Heart left ventricle (tissue), 16 donors: ENCODE measurements at regions of chr5 and their contacts with region 1.

Region 1: GRCh38 chr5:112529525-112529924 is 110.4 kb upstream of the EPB41L4A start:
- DNase-seq: no peak
- ATAC-seq: no peak
- H3K4me3 ChIP-seq: no peak overlapping the region
- H3K27ac ChIP-seq: no peak overlapping the region
- H3K4me1 ChIP-seq: no peaks in the 10 kb centered on the region
- H3K27me3 ChIP-seq: no peaks in the 10 kb centered on the region
- CTCF ChIP-seq: peak in 10 of 12 donors; percentile 17 to 58 (median 40)
- POLR2A ChIP-seq: no peak

Region 2: DNA sequence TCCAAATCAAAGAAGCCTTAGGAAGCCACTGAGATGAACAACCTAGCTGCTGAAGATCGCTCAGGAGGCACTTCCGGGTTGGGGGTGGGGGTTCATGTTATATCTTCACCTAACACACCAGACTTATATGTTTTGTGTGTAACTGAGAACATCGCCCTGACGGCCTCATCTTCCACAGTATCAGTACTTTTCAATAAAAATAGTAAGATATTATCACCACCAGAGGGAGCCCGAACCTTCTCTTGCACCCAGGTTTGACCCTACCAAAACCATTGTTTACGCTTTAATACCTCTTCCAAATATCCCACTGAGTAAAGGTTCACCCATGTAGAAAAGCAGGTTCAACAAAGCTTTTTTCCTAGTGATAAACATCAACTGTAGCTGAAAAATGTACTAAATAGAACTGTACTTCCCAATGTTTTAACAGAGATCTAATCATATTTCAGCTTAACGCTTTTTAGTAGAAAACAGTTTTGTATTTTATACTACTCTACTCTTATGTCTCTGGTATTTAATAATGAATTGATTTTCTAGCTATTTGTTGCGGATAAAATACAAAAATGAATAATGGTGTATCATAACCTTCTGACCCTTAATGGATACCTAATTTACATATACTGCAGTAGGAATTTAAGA is 354.4 kb before region 1 on chr5:
- intact Hi-C with region 1: loop called in 4 of 10 experiments (anchors 5 to 10 kb)
- DNase-seq: peak in 2 of 5 donors; percentile 16 to 26
- ATAC-seq: peak in 3 of 4 donors; percentile 64 to 74 (median 72)
- H3K4me3 ChIP-seq: no peak overlapping the region
- H3K27ac ChIP-seq: no peak overlapping the region
- H3K4me1 ChIP-seq: no peaks in the 10 kb centered on the region
- H3K27me3 ChIP-seq: no peaks in the 10 kb centered on the region
- CTCF ChIP-seq: peak; percentile 48 to 76 (median 70)
- POLR2A ChIP-seq: no peak

Region 3: DNA sequence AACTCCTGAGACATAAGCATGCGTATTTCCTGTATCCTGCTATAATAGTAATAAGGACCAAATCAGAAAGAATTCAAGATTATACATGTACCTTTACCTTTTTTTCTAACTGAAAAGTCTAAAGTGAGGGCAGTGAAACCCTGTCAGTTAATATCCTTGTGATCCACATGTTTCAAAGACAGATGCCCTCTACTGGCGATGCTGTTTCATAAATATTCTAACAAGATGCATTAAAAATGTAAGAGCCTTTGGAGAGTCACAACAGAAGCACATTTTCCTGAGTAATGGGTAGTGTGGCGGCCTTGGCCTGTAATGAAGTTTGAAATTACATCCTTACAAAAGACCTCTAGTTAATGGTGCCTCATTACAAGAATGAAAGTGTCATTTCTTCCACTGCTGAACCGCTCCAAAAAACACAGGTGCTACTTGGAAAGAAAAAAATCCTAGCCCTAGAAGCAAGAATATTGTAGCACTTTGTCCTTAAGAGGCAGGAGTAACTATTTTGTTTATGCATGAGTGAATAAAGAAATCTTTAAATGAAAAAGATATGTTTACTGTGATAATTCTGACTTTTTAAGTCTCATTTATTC is 343.0 kb before region 1 on chr5:
- intact Hi-C with region 1: loop called in 1 of 10 experiments (anchors 10 kb)
- DNase-seq: no peak
- ATAC-seq: peak in 2 of 4 donors; percentile 26 to 38
- H3K4me3 ChIP-seq: no peak overlapping the region
- H3K27ac ChIP-seq: no peak overlapping the region
- H3K4me1 ChIP-seq: peaks cover 0 to 3% (median 0%) of the 10 kb centered on the region in 12 donors
- H3K27me3 ChIP-seq: no peaks in the 10 kb centered on the region
- CTCF ChIP-seq: peak; percentile 21 to 67 (median 46)
- POLR2A ChIP-seq: no peak

Region 4: DNA sequence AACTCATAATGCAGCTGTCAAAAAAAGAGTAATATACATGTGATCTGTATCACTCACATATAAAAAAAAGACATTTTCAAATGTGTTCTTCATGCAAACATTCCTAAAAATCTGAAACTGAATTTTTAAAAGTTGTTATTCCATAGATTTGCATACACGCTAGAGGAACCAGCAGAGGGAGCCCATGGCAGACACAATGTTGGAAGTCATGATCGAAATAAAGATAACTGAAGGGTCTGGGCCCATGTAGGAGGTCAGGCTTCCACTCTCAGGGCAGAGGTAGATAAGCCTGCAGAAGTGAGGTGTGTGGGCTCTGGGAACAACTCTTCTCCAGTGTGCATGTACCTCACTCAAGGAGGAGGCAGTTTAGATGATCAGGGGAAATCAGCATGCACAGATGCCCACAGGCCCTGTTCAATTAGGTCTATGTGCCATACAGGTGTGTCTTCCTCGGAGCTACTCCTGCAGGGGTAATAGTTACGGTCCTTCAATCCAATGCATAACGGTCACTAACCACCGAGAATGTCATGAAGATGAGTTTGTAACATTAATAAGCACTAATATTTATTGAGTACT is 319.0 kb before region 1 on chr5:
- intact Hi-C with region 1: loop called in 1 of 10 experiments (anchors 10 kb)
- DNase-seq: peak in 4 of 5 donors; percentile 14 to 51 (median 26)
- ATAC-seq: peak in 3 of 4 donors; percentile 48 to 70 (median 68)
- H3K4me3 ChIP-seq: no peak overlapping the region
- H3K27ac ChIP-seq: no peak overlapping the region
- H3K4me1 ChIP-seq: peaks cover 0 to 8% (median 0%) of the 10 kb centered on the region in 12 donors
- H3K27me3 ChIP-seq: no peaks in the 10 kb centered on the region
- CTCF ChIP-seq: peak; percentile 35 to 74 (median 66)
- POLR2A ChIP-seq: no peak